ENCODE measurements at regions of chr1 and their contacts with region 1.

Region 1: DNA sequence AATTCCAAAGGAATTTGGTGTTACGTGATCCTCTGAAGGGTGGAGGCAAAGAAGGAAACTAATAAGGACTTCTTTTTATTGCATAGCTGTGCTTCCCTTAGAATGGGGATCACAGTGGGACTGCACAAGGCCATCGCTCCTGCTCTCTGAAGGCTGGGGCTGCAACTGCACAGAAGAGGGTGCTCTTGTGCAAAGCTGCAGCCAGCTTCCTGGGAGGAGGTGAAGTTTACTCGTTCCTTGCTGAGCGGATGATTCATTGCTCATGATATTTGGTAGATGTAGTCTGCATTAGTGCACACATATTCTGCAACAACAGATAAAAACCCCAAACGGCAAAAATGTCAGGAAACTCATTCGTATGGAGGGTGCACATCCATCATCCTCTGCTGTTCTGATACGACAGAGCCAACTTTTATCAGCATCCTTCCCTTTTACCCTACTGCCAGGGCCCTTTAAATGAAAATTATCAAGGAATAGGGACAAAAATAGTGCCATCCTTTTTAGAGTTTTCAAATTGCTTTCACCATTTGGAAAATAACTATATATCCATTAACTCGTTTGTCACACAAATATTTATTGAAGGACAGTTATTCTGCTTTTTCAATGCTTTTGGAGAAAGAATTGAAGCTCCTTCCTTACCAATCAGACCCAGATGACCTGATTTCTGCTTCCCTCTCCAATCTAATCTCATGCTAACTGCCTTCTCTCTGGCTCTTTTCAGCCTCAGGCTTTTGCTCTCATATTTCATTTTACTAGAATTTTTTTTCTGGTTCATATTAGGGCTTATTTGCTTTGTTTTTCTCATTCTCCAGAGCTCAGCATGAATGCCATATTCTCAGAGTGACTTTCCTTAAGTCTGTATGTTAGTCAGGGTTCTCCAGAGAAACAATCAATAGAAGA is 263.6 kb downstream of the DUSP10 start:
- DNase-seq: peak; percentile 30 to 71
- ATAC-seq: peak; percentile 75 to 93 (median 88)
- H3K4me3 ChIP-seq: no peak overlapping the region
- H3K27ac ChIP-seq: no peak overlapping the region
- H3K4me1 ChIP-seq: no peaks in the 10 kb centered on the region
- H3K27me3 ChIP-seq: peaks cover 0 to 3% (median 0%) of the 10 kb centered on the region in 3 donors
- CTCF ChIP-seq: peak; percentile 51

Region 2: DNA sequence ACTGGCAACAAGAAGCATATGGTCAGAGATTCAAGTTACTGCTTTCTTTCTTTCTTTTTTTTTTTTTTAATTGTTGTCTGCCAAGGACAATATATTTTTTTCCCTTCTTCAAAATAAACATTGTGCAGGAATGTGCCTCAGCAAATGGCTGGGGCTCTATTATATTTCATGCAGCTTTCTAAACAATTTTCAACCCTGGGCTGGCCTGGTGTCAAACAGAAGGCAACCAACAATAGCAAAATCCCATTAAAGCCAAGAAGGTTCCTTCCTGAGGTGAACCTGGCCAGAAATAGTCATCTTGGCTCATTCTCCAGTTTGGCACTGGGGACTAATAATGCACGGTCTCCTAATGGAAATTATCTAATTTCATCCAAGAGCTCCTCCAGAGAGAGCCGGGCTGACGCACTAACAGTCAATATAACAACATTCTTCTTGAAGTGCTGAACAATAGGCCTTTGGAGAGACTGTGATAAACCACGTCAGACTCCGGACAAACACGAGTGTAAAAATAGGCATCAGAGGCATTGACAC is 634.8 kb before region 1 on chr1:
- intact Hi-C with region 1: no loop called
- DNase-seq: no peak
- ATAC-seq: peak in 3 of 4 donors; percentile 49 to 61 (median 58)
- H3K4me3 ChIP-seq: no peak overlapping the region
- H3K27ac ChIP-seq: no peak overlapping the region
- H3K4me1 ChIP-seq: no peaks in the 10 kb centered on the region
- H3K27me3 ChIP-seq: no peaks in the 10 kb centered on the region
- CTCF ChIP-seq: no peak

Region 3: GRCh38 chr1:221363039-221363438 is 115.3 kb before region 1 on chr1:
- intact Hi-C with region 1: no loop called
- DNase-seq: no peak
- ATAC-seq: no peak
- H3K4me3 ChIP-seq: no peak overlapping the region
- H3K27ac ChIP-seq: no peak overlapping the region
- H3K4me1 ChIP-seq: no peaks in the 10 kb centered on the region
- H3K27me3 ChIP-seq: no peaks in the 10 kb centered on the region
- CTCF ChIP-seq: no peak

Region 4: GRCh38 chr1:221517961-221518360 is 39.7 kb after region 1 on chr1:
- intact Hi-C with region 1: loop called in 1 of 2 experiments (anchors 2 kb)
- DNase-seq: no peak
- ATAC-seq: no peak
- H3K4me3 ChIP-seq: no peak overlapping the region
- H3K27ac ChIP-seq: no peak overlapping the region
- H3K4me1 ChIP-seq: peaks cover 3% of the 10 kb centered on the region
- H3K27me3 ChIP-seq: no peaks in the 10 kb centered on the region
- CTCF ChIP-seq: no peak

Region 5: GRCh38 chr1:222009105-222009730 is 530.9 kb after region 1 on chr1:
- intact Hi-C with region 1: loop called in 1 of 2 experiments (anchors 10 kb)
- DNase-seq: no peak
- ATAC-seq: peak; percentile 48 to 73 (median 55)
- H3K4me3 ChIP-seq: no peak overlapping the region
- H3K27ac ChIP-seq: no peak overlapping the region
- H3K4me1 ChIP-seq: no peaks in the 10 kb centered on the region
- H3K27me3 ChIP-seq: no peaks in the 10 kb centered on the region
- CTCF ChIP-seq: peak; percentile 44

Region 6: DNA sequence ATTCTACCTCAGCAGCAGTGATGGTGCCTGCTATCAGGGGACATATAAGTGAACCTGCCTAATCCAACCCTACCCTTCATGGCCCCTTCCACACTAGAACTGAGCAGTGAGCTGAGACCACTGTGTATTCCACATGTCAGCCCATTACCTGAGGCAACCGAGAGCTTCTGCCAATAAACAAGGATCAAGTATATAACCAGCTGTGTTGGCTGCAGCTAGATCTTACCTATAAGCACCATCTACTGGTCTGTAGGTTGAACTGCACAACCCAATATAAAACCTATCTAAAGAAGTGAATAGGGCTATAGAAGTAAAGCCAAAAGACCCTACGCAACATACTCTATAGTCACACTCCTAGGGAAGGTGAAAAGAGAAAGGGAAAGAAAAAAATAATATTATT is 692.7 kb after region 1 on chr1:
- intact Hi-C with region 1: loop called in 1 of 2 experiments (anchors 5 kb)
- DNase-seq: no peak
- ATAC-seq: peak; percentile 78 to 87 (median 82)
- H3K4me3 ChIP-seq: no peak overlapping the region
- H3K27ac ChIP-seq: no peak overlapping the region
- H3K4me1 ChIP-seq: no peaks in the 10 kb centered on the region
- H3K27me3 ChIP-seq: no peaks in the 10 kb centered on the region
- CTCF ChIP-seq: peak; percentile 65

Measured in psoas muscle (tissue), 8 donors.